ENCODE measurements at regions of chr15 and their contacts with region 1.

Region 1: DNA sequence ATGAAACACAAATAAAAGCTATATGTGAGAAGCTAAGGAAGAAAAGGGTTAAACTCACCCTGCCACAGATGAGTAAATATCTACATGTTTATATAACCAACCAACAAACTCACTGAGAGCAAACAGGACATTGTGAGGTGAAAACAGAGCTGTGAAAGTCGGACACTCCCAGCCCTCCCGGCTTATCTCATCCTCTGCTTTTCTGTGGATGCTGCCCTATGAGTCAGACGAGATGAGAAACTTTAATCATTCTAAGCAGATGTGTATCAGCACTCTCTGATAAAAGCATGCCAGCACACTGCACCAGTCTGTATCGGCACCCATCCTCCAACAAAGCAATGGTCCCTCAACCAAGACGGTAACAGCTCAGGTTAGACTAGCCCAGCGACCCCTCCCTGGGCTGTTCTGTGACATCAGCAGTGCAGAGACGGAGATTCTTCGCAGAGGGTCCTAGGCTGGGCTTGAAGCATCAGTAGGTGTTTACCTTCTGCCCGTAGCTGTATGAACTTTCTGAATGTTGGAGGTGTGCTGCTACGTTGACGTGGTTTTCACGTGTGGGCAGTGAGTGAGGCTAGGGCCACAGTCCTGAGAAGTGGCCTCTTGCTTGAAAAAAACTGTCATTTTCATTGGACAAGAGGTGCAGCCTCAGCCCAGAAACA is 119.8 kb upstream of the ALDH1A3 start:
- DNase-seq: peak; percentile 76
- ATAC-seq: peak; percentile 86
- H3K4me3 ChIP-seq: no peak overlapping the region
- H3K27ac ChIP-seq: peak overlapping the region; percentile 51; the same call in 1 of the 2 replicates
- H3K4me1 ChIP-seq: peaks cover 12% of the 10 kb centered on the region; the same call in 1 of the 2 replicates
- H3K27me3 ChIP-seq: no peaks in the 10 kb centered on the region
- CTCF ChIP-seq: no peak
- POLR2A ChIP-seq: no peak
- RAD21 ChIP-seq: no peak

Region 2: GRCh38 chr15:100671858-100672543 is 87.8 kb before region 1 on chr15:
- CTCF ChIA-PET with region 1: interaction called, 3 read pairs
- POLR2A ChIA-PET with region 1: no interaction called
- dilution Hi-C with region 1: no loop called
- in situ Hi-C with region 1: no loop called
- intact Hi-C with region 1: loop called (anchors 1 kb)
- DNase-seq: peak; percentile 53
- ATAC-seq: peak; percentile 78
- H3K4me3 ChIP-seq: no peak overlapping the region
- H3K27ac ChIP-seq: peak overlapping the region; percentile 23
- H3K4me1 ChIP-seq: peaks cover 4% of the 10 kb centered on the region; the same call in 1 of the 2 replicates
- H3K27me3 ChIP-seq: no peaks in the 10 kb centered on the region
- CTCF ChIP-seq: peak; percentile 75
- POLR2A ChIP-seq: 0 out of 2 replicates have a peak, but pooled peaks have one; percentile 26
- RAD21 ChIP-seq: peak; percentile 84

Region 3: DNA sequence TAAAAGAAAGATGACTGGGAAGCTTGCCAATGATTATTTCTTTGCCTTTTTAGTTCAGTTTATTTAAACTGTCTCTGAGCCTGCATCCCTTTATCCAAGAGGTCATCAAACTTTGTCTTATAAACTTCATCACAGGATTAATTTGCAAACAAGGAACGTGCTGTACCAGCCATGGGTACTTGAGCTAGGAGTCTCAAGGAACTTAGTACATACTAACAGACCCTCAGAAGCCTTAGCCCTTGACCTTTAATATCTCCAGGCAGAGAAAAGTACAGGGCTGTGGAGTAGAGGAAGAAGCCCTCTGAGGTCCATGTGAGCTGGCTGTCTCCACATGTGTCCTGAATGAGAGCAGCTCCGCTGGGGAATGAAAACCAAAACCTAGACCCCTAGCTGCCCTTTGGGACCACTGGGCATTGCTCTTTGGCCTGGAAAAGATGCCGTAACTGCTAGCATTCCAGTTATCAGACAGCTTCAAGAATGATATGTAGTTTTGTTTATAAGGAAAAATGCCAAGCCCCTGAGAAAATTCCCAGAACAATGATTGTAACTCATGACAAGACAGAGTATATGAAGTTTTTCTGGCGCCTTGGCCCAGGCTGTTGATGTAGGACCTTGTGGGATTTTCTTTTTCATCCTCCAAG is 65.3 kb before region 1 on chr15:
- CTCF ChIA-PET with region 1: no interaction called
- POLR2A ChIA-PET with region 1: no interaction called
- dilution Hi-C with region 1: no loop called
- in situ Hi-C with region 1: no loop called
- intact Hi-C with region 1: loop called (anchors 5 kb)
- DNase-seq: peak; percentile 62
- ATAC-seq: peak; percentile 65
- H3K4me3 ChIP-seq: no peak overlapping the region
- H3K27ac ChIP-seq: 0 out of 2 replicates have a peak overlapping the region, but pooled peaks have one; percentile 4
- H3K4me1 ChIP-seq: peaks cover 7% of the 10 kb centered on the region
- H3K27me3 ChIP-seq: no peaks in the 10 kb centered on the region
- CTCF ChIP-seq: no peak
- POLR2A ChIP-seq: no peak
- RAD21 ChIP-seq: no peak

Region 4: DNA sequence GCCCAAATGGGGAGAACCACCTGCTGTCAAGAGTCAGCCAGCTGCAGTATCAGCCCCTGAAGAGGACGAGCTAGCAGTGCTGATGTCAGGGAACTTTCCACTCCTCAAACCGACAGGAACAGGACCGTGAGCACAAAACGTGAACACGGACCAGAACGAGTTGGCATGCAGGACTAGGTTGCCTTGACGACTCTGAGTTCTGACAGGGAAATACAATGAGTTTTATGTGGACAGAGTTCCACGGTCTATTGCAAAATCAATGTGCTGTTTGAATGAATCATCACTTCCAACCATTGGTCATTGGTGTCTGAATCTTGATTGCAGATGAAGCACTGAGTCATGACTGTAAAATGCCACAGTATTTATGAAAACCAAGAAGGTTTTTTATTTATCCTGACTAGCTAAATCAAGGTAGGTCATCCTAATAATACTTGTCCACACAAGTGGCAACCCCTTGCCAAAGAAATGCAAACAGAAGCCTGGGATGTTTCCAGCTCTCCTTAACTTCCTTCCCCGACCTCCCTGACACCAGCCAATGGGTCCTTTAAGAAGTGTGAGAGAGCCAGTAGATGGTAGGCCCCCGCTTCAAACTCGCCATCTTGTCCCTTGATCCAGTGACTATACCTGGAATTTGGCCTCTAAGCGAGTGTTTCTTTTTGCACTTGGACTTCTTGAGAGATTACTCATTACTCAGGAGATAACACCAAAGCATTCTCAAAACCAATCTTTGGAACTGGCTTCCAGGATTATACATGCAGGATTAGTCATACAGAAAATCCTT is 37.9 kb before region 1 on chr15:
- CTCF ChIA-PET with region 1: no interaction called
- POLR2A ChIA-PET with region 1: no interaction called
- dilution Hi-C with region 1: no loop called
- in situ Hi-C with region 1: no loop called
- intact Hi-C with region 1: loop called (anchors 1 kb)
- DNase-seq: peak; percentile 100
- ATAC-seq: peak; percentile 59
- H3K4me3 ChIP-seq: no peak overlapping the region
- H3K27ac ChIP-seq: peak overlapping the region; percentile 68
- H3K4me1 ChIP-seq: peaks cover 38% of the 10 kb centered on the region
- H3K27me3 ChIP-seq: no peaks in the 10 kb centered on the region
- CTCF ChIP-seq: no peak
- POLR2A ChIP-seq: no peak
- RAD21 ChIP-seq: 0 out of 2 replicates have a peak, but pooled peaks have one; percentile 23

Measured in IMR-90 (cell line).